Lower leg skin (tissue), 4 donors: ENCODE measurements at regions of chr9 and their contacts with region 1.

Region 1: GRCh38 chr9:32954642-32955041 is 46.8 kb downstream of the APTX start:
- DNase-seq: no peak
- H3K4me3 ChIP-seq: no peak overlapping the region
- CTCF ChIP-seq: no peak
- POLR2A ChIP-seq: no peak

Region 2: DNA sequence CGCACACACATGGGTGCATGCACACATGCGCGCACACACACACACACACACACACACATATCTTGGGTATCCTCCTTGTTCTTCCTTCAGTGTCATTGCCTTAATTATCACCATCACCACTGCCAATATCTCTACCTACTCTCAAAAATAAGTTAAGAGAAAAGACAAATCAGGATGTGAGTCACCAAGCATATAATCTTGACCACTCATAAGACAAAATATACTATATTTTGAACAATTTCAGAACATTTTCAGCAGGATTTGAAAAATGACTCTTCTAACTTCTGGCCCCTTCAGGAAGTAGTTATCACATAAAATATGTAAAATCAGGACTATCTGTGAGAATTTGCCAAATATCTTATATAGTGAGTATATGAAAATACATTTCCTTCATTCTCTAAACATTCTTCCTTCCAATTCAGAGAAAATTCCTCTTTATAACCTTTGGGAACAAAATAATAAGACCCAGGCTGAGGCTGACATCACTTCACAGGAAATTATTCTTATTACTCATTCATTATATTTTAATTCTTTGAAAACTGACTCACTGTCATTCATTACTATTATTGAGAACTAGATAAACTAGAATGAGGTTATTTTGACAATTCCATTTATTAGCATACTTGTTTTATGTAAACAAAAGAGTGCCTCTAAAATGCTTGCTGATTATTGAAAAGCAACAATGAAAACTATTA is 1342.2 kb before region 1 on chr9:
- intact Hi-C with region 1: no loop called
- DNase-seq: no peak
- H3K4me3 ChIP-seq: no peak overlapping the region
- CTCF ChIP-seq: no peak
- POLR2A ChIP-seq: no peak

Region 3: DNA sequence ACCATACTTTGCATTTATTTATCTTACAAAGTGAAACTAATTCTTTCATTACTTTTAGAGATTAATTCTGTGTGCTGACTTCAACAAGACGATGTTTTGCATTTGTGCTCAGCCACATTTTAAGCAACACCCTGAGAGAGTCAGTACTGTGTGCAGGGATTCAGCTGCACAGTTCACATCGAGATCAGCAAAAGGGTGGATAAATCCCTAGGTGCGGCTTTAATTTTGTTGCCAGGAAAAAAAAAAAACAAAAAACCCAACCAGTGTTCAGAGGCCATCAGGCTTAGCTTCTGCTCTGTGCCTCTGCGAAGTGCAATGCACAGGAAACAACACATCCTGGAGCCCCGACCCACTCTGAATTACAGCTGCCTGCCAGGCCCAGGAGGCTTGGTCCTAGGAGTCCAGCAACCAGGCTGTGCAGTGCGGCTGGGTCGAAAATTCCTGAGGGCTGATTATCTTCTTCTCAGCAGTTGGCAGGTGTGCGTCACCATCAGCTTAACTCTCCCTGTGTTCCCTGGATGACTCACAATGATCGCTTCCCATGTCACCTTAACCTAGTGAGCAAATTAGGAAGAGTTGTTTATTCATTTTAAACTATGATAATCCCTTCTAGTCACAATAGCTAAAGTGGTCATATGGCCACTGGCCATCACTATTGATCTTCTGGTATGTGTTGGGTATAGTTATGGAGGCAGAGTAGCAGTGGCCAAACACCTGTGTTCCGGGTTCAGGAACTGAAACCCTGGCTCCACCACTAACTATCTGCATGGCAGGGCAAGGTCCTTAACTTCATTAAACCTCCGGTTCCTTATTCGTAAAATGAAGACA is 350.5 kb before region 1 on chr9:
- intact Hi-C with region 1: loop called (anchors 10 kb)
- DNase-seq: no peak
- H3K4me3 ChIP-seq: no peak overlapping the region
- CTCF ChIP-seq: no peak
- POLR2A ChIP-seq: no peak

Region 4: GRCh38 chr9:32906213-32906612 is 48.4 kb before region 1 on chr9:
- intact Hi-C with region 1: no loop called
- DNase-seq: no peak
- H3K4me3 ChIP-seq: no peak overlapping the region
- CTCF ChIP-seq: no peak
- POLR2A ChIP-seq: no peak